Transverse colon (tissue), 4 donors: ENCODE measurements at regions of chr17 and their contacts with region 1.

Region 1: DNA sequence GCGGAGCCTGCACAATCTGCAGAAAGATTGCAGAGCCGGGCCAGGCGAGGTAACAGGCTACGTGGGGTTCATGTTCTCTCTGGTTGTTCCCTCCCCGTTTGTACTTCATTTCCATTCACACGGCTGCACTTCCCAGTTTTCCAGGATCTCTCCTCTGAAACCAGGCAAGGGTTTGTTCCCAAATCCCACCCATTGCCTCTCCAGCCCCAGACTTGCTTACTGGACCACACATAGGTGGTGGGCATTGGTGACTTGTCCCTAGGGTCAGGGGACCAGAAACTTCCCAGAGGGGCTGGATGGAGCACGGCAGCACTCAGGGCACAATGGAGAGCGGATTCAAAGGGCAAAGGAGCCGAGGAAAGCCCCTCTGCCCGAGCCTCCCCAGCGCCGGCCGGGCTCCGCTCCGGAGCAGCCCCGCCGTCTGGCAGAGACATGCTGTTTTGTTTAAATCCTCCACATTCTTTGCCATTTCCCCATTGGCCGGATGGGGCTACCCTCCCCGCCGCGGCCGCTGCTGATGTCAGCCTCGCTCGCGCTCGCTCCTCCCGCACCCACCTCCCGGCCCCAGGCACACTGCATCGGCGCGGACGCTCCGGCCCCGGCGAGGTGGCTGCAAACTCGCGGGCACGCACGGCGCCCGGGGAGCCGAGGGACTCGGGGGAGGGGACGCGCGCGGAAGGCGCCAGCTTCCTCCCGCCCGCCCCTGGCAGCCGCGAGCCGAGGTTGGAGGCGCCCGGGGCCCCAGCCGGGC is at the start of gene PITPNC1:
- DNase-seq: peak; percentile 87
- H3K4me3 ChIP-seq: peak within 1 kb of the TSS; percentile 63 to 72 (median 68)
- H3K27ac ChIP-seq: peak within 1 kb of the TSS; percentile 88 to 94 (median 92)
- H3K4me1 ChIP-seq: peaks cover 0 to 12% (median 7%) of the 10 kb centered on the region in 4 donors
- H3K27me3 ChIP-seq: no peaks in the 10 kb centered on the region
- CTCF ChIP-seq: peak in 2 of 5 experiments; percentile 12 to 24
- EP300 ChIP-seq: no peak
- POLR2A ChIP-seq: peak; percentile 61
- total RNA-seq, gene PITPNC1: 1.6 to 10.3 (median 4.0) TPM

Region 2: GRCh38 chr17:67475236-67475937 is 98.5 kb after region 1 on chr17:
- in situ Hi-C with region 1: loop called in 1 of 4 experiments (anchors 10 kb)
- intact Hi-C with region 1: loop called (anchors 10 kb)
- DNase-seq: peak; percentile 86
- H3K4me3 ChIP-seq: no peak overlapping the region
- H3K27ac ChIP-seq: peak overlapping the region; percentile 31 to 65 (median 42)
- H3K4me1 ChIP-seq: peaks cover 0 to 16% (median 2%) of the 10 kb centered on the region in 4 donors
- H3K27me3 ChIP-seq: no peaks in the 10 kb centered on the region
- CTCF ChIP-seq: peak; percentile 82 to 93 (median 92)
- EP300 ChIP-seq: no peak
- POLR2A ChIP-seq: peak; percentile 14

Region 3: GRCh38 chr17:67602956-67603355 is 226.0 kb after region 1 on chr17:
- in situ Hi-C with region 1: loop called in 1 of 4 experiments (anchors 25 kb)
- intact Hi-C with region 1: no loop called
- DNase-seq: peak; percentile 22
- H3K4me3 ChIP-seq: no peak overlapping the region
- H3K27ac ChIP-seq: no peak overlapping the region
- H3K4me1 ChIP-seq: peaks cover 0 to 9% (median 0%) of the 10 kb centered on the region in 4 donors
- H3K27me3 ChIP-seq: no peaks in the 10 kb centered on the region
- CTCF ChIP-seq: peak in 4 of 5 experiments; percentile 29 to 34 (median 32)
- EP300 ChIP-seq: no peak
- POLR2A ChIP-seq: no peak

Region 4: GRCh38 chr17:67689534-67690177 is 312.7 kb after region 1 on chr17:
- in situ Hi-C with region 1: loop called (anchors 5 to 25 kb)
- intact Hi-C with region 1: loop called (anchors 2 kb)
- DNase-seq: peak; percentile 27
- H3K4me3 ChIP-seq: no peak overlapping the region
- H3K27ac ChIP-seq: no peak overlapping the region
- H3K4me1 ChIP-seq: no peaks in the 10 kb centered on the region
- H3K27me3 ChIP-seq: no peaks in the 10 kb centered on the region
- CTCF ChIP-seq: peak; percentile 71 to 81 (median 77)
- EP300 ChIP-seq: no peak
- POLR2A ChIP-seq: no peak